CD4-positive, alpha-beta T cell (primary cell): ENCODE measurements at regions of chr6 and their contacts with region 1.

Region 1: DNA sequence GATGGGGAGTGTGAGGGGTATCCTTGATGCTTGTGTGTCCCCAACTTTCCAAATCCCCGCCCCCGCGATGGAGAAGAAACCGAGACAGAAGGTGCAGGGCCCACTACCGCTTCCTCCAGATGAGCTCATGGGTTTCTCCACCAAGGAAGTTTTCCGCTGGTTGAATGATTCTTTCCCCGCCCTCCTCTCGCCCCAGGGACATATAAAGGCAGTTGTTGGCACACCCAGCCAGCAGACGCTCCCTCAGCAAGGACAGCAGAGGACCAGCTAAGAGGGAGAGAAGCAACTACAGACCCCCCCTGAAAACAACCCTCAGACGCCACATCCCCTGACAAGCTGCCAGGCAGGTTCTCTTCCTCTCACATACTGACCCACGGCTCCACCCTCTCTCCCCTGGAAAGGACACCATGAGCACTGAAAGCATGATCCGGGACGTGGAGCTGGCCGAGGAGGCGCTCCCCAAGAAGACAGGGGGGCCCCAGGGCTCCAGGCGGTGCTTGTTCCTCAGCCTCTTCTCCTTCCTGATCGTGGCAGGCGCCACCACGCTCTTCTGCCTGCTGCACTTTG is at the start of gene TNF:
- DNase-seq: peak in 13 of 14 experiments; percentile 47 to 93 (median 64)
- ATAC-seq: peak; percentile 14
- H3K4me3 ChIP-seq: peak within 1 kb of the TSS; percentile 75
- H3K4me3 Mint-ChIP-seq: peak within 1 kb of the TSS; percentile 95
- H3K27ac ChIP-seq: peak within 1 kb of the TSS; percentile 84 to 87
- H3K27ac Mint-ChIP-seq: peak within 1 kb of the TSS; percentile 95
- H3K4me1 ChIP-seq: peaks cover 97% of the 10 kb centered on the region
- H3K4me1 Mint-ChIP-seq: peaks cover 95% of the 10 kb centered on the region
- H3K27me3 ChIP-seq: no peaks in the 10 kb centered on the region
- H3K27me3 Mint-ChIP-seq: no peaks in the 10 kb centered on the region
- CTCF ChIP-seq: no peak
- total RNA-seq, gene TNF: 33.1 to 34.2 TPM

Region 2: DNA sequence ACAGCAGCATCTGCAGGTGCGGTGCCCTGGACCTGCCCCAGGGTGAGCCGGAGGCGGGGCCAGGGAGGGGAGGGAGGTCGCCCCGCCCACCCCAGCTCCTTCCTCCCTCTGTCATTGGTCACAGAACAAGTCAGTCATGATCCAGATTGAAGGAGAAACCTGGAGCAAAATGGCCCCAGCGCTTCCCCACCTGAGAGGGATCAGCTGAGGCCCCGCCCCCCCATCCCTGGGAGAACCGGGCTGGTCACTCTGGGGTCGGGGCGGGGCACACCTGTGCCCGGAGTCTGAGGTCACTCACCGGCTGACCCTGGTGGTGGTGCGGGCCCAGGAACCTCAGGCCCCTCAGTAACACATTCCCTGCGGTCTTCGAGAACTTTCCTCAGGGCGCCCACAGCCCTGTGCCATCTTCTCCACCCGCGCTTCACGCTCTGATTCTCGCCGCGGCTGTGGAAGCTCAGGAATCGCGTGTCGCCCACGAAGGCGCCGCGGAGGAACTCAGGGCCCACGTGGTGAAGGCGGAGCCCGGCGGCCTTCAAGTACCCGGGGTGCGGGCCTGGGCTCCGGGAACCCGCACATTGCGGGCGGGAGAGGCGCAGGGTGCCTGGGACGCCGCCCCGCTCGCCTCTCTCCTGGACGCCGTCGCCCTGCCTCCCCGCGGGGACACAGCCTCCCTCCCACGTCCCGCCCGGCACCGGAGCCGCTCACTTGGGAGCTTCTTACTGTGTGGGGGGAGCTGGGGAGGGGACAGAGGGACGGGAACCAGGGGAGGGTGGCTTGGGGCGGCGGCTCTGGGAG is 267.2 kb before region 1 on chr6:
- CTCF ChIA-PET with region 1: no interaction called
- POLR2A ChIA-PET with region 1: no interaction called
- intact Hi-C with region 1: no loop called
- DNase-seq: peak; percentile 58 to 90 (median 68)
- ATAC-seq: peak; percentile 95
- H3K4me3 ChIP-seq: peak overlapping the region; percentile 73
- H3K4me3 Mint-ChIP-seq: peak overlapping the region; percentile 95
- H3K27ac ChIP-seq: no peak overlapping the region
- H3K27ac Mint-ChIP-seq: peak overlapping the region; percentile 76
- H3K4me1 ChIP-seq: peaks cover 18% of the 10 kb centered on the region
- H3K4me1 Mint-ChIP-seq: no peaks in the 10 kb centered on the region
- H3K27me3 ChIP-seq: peaks cover 0 to 3% of the 10 kb centered on the region in 2 experiments
- H3K27me3 Mint-ChIP-seq: peaks cover 14% of the 10 kb centered on the region
- CTCF ChIP-seq: no peak

Region 3: GRCh38 chr6:31559958-31560696 is 15.3 kb before region 1 on chr6:
- CTCF ChIA-PET with region 1: interaction called, 11 read pairs
- POLR2A ChIA-PET with region 1: interaction called, 1,160 read pairs
- intact Hi-C with region 1: loop called (anchors 2 kb)
- DNase-seq: peak in 7 of 14 experiments; percentile 29 to 81 (median 65)
- ATAC-seq: peak; percentile 58
- H3K4me3 ChIP-seq: peak overlapping the region; percentile 44
- H3K4me3 Mint-ChIP-seq: peak overlapping the region; percentile 82
- H3K27ac ChIP-seq: peak overlapping the region; percentile 63 to 74
- H3K27ac Mint-ChIP-seq: peak overlapping the region; percentile 90
- H3K4me1 ChIP-seq: peaks cover 72% of the 10 kb centered on the region
- H3K4me1 Mint-ChIP-seq: peaks cover 62% of the 10 kb centered on the region
- H3K27me3 ChIP-seq: no peaks in the 10 kb centered on the region
- H3K27me3 Mint-ChIP-seq: no peaks in the 10 kb centered on the region
- CTCF ChIP-seq: no peak